Head of caudate nucleus (tissue), 42 donors: ENCODE measurements at regions of chr1 and their contacts with region 1.

Region 1: DNA sequence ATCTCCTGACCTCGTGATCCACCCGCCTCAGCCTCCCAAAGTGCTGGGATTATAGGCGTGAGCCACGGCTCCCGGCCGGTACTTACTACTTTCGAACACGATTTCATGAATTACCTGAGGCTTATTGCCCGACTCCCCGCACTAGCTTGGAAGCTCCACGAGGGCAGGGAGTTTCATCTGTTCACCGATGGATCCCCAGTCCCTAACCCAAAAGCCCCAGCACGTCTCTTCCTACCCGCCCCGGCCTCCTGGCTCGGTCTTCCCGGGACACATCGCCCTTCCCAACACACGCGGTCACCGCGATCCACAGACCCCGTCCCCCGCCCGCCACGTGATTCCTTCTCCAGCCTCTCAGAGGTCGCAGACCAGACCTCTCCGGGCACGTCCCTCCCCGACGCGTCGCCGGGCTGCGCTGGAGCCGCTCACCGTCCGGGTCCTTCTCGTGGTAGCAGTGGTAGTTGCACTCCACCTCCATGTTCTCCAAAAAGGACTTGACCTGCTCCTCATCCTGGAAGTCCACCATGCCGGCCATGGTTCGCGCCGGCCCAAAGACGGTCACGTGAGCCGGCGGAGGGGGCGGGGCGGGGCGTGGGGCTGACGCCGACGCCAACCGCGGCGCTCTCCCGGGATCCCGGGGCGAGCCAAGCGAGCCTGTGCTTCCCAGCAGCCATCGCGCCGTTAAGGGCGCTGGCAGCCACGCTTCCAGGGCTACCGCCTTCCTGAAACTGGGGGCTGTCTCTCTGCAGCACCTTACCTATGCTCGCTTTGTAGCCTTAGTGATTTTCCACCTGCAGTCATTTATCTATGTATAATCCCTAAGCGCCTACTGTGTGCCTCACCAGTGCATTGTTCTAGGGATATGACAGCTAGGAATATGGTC is at the start of gene COA7:
- DNase-seq: peak; percentile 67 to 95 (median 89)

Region 2: GRCh38 chr1:52726265-52727113 is 28.5 kb after region 1 on chr1 and contains the start of gene ZYG11B:
- intact Hi-C with region 1: loop called (anchors 2 kb)
- DNase-seq: peak; percentile 71 to 97 (median 90)